Naive thymus-derived CD4-positive, alpha-beta T cell (primary cell): ENCODE measurements at regions of chr10 and their contacts with region 1.

Region 1: DNA sequence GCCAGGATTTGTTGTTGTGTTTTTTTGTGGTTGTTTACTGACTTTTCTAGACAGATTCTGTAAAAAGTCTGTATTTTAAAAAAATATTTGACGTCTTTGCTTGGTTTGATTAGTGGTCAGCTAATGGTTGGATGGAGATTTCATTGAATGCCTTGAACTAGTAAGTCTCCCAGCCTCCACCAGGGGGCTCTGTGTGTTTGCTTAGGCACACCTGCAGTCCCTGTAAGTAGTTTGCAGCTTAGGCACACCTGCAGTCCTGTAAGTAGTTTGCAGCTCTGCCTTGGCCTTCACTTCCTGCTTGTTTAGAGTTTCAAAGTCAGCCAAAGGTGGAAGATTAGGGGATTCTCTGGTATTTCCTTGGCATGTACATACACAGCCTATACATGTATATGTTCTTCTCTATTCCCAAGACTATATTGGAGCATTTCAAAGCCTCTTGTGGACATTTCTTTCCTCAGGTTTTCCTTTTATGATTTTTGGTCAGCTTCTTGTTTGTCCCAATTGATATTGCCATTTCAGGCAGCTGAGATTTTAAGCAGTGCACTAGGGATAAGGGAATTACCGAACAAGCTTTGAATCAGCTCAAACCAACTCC is 101.6 kb downstream of the CCSER2 start:
- DNase-seq: peak; percentile 23 to 55 (median 45)
- ATAC-seq: peak; percentile 84
- H3K4me3 ChIP-seq: no peak overlapping the region
- H3K4me3 Mint-ChIP-seq: peak overlapping the region in 3 of 10 donors; percentile 10 to 18 (median 14)
- H3K27ac ChIP-seq: no peak overlapping the region
- H3K27ac Mint-ChIP-seq: peak overlapping the region in 1 of 9 donors; percentile 24
- H3K4me1 ChIP-seq: peaks cover 1 to 9% of the 10 kb centered on the region in 2 donors
- H3K4me1 Mint-ChIP-seq: peaks cover 25 to 70% (median 59%) of the 10 kb centered on the region in 7 donors
- H3K27me3 ChIP-seq: no peaks in the 10 kb centered on the region
- H3K27me3 Mint-ChIP-seq: no peaks in the 10 kb centered on the region

Region 2: DNA sequence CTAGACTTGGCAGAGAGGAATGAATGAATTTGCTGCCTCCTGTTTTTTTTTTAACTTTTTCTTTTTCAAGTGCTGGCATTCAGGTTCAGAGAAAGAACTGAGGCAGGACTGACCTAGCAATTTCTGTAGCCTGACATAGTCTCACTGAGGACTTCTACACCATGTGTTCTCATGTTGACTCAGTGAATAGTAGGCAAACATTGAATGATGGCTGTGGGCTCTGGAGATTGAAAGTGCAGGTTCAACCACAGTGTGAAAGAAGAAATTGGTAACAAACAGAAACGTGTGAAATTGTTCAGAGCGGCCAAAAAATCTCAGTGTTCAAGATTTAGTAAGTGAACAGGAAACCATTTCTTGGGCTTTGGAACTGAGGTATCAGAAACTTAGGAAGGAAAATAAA is 613.1 kb before region 1 on chr10:
- CTCF ChIA-PET with region 1: no interaction called
- POLR2A ChIA-PET with region 1: no interaction called
- intact Hi-C with region 1: no loop called
- DNase-seq: no peak
- ATAC-seq: no peak
- H3K4me3 ChIP-seq: no peak overlapping the region
- H3K4me3 Mint-ChIP-seq: no peak overlapping the region
- H3K27ac ChIP-seq: no peak overlapping the region
- H3K27ac Mint-ChIP-seq: no peak overlapping the region
- H3K4me1 ChIP-seq: no peaks in the 10 kb centered on the region
- H3K4me1 Mint-ChIP-seq: no peaks in the 10 kb centered on the region
- H3K27me3 ChIP-seq: no peaks in the 10 kb centered on the region
- H3K27me3 Mint-ChIP-seq: no peaks in the 10 kb centered on the region

Region 3: DNA sequence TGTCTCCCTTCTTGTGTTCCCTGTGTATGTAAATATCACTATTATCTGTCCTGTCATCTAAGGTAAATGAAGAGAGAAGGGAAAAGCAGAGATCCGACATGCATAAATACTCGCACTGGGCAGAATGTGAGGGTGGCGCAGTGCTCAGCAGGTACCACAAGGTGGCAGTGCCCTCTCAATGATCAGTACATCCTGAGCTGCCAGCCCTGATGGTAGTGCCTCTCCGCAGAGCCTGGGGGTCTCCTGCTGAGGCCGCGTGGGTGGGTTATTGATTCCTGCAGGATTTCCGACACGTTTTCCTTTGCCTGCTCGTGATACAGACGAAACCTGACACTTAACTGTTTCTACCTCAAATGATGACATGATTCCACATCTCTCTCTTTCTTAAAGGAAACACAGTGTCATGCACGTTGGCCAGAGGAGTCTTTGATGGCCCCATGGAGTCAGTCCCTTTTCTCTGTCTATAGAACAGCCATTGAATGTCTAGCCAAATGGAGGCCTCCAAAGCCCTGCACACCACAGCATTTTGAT is 165.3 kb before region 1 on chr10:
- CTCF ChIA-PET with region 1: no interaction called
- POLR2A ChIA-PET with region 1: no interaction called
- intact Hi-C with region 1: loop called (anchors 1 to 5 kb)
- DNase-seq: peak; percentile 37 to 74 (median 61)
- ATAC-seq: peak; percentile 94
- H3K4me3 ChIP-seq: no peak overlapping the region
- H3K4me3 Mint-ChIP-seq: no peak overlapping the region
- H3K27ac ChIP-seq: no peak overlapping the region
- H3K27ac Mint-ChIP-seq: no peak overlapping the region
- H3K4me1 ChIP-seq: peaks cover 0 to 3% of the 10 kb centered on the region in 2 donors
- H3K4me1 Mint-ChIP-seq: peaks cover 0 to 16% (median 7%) of the 10 kb centered on the region in 7 donors
- H3K27me3 ChIP-seq: no peaks in the 10 kb centered on the region
- H3K27me3 Mint-ChIP-seq: peaks cover 12 to 36% (median 25%) of the 10 kb centered on the region in 5 donors

Region 4: DNA sequence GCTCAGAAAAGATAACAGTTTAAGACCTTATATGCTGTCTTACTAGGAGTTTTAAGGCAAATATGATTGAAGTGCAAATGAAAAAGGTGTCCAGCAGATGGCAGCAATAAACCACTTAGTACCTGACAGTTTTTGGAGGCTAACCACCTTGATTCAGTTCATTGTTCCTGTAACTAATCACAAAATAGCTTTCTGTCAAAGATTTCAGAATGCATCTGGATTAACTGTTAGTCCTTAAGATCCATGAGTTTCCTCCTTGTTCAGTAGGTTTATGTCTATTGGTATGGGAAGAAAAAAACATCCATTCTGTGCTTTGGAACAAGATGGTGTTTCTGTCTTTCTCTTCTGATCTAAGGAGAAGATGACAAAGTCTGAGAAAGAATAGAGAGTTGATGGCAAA is 55.0 kb before region 1 on chr10:
- CTCF ChIA-PET with region 1: no interaction called
- POLR2A ChIA-PET with region 1: no interaction called
- intact Hi-C with region 1: loop called in 1 of 2 experiments (anchors 5 kb)
- DNase-seq: peak in 7 of 9 donors; percentile 34 to 68 (median 57)
- ATAC-seq: peak; percentile 70
- H3K4me3 ChIP-seq: no peak overlapping the region
- H3K4me3 Mint-ChIP-seq: peak overlapping the region in 1 of 10 donors; percentile 4
- H3K27ac ChIP-seq: no peak overlapping the region
- H3K27ac Mint-ChIP-seq: peak overlapping the region in 5 of 9 donors; percentile 18 to 79 (median 41)
- H3K4me1 ChIP-seq: peaks cover 0 to 5% of the 10 kb centered on the region in 2 donors
- H3K4me1 Mint-ChIP-seq: peaks cover 19 to 55% (median 37%) of the 10 kb centered on the region in 7 donors
- H3K27me3 ChIP-seq: no peaks in the 10 kb centered on the region
- H3K27me3 Mint-ChIP-seq: no peaks in the 10 kb centered on the region

Region 5: GRCh38 chr10:84440781-84441180 is 10.8 kb after region 1 on chr10:
- CTCF ChIA-PET with region 1: interaction called, 10 read pairs
- POLR2A ChIA-PET with region 1: no interaction called
- intact Hi-C with region 1: no loop called
- DNase-seq: no peak
- ATAC-seq: no peak
- H3K4me3 ChIP-seq: no peak overlapping the region
- H3K4me3 Mint-ChIP-seq: no peak overlapping the region
- H3K27ac ChIP-seq: no peak overlapping the region
- H3K27ac Mint-ChIP-seq: no peak overlapping the region
- H3K4me1 ChIP-seq: no peaks in the 10 kb centered on the region
- H3K4me1 Mint-ChIP-seq: peaks cover 1 to 10% (median 4%) of the 10 kb centered on the region in 7 donors
- H3K27me3 ChIP-seq: no peaks in the 10 kb centered on the region
- H3K27me3 Mint-ChIP-seq: no peaks in the 10 kb centered on the region

Region 6: DNA sequence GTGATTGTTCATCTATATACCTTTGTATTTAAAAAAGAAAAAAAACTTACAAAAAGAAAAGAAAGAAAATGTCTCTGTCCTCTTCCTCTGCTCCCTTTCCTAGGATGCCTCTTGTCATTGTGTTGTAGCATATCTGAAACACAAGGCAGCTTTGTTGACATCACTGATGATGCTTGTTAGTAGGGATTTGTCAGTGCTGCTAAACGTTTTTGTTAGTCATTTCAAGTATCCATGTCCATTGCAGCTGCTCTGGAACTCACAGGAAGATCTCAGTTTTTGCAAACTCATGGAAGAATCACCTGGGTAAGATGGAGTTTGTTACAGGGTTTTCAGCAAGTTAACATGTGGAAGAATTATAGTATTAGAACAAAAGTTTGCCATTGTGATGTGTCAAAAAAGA is 22.0 kb after region 1 on chr10:
- CTCF ChIA-PET with region 1: interaction called, 3 read pairs
- POLR2A ChIA-PET with region 1: no interaction called
- intact Hi-C with region 1: loop called in 1 of 2 experiments (anchors 2 kb)
- DNase-seq: no peak
- ATAC-seq: no peak
- H3K4me3 ChIP-seq: no peak overlapping the region
- H3K4me3 Mint-ChIP-seq: no peak overlapping the region
- H3K27ac ChIP-seq: no peak overlapping the region
- H3K27ac Mint-ChIP-seq: peak overlapping the region in 1 of 9 donors; percentile 12
- H3K4me1 ChIP-seq: no peaks in the 10 kb centered on the region
- H3K4me1 Mint-ChIP-seq: peaks cover 2 to 26% (median 8%) of the 10 kb centered on the region in 7 donors
- H3K27me3 ChIP-seq: no peaks in the 10 kb centered on the region
- H3K27me3 Mint-ChIP-seq: no peaks in the 10 kb centered on the region

Region 7: DNA sequence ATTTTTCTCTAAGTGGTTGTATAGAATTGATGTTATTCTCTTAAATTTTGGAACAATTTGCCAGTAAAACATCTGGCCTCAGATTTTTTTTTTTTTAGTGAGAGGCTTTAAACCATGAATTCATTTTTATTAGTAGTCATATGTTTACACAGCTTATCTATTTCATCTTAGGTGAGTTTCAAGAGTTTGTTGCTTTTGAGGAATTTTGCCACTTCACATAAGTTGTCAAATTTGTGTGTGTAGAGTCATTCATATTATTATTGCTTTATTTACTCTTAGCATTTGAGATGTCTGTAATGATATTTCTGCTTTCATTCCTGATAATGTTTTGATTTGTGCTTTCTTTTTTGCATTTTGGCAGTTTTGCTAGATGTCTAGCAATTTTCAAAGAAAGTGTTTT is 30.5 kb after region 1 on chr10:
- CTCF ChIA-PET with region 1: interaction called, 3 read pairs
- POLR2A ChIA-PET with region 1: no interaction called
- intact Hi-C with region 1: loop called in 1 of 2 experiments (anchors 5 kb)
- DNase-seq: no peak
- ATAC-seq: no peak
- H3K4me3 ChIP-seq: no peak overlapping the region
- H3K4me3 Mint-ChIP-seq: no peak overlapping the region
- H3K27ac ChIP-seq: no peak overlapping the region
- H3K27ac Mint-ChIP-seq: no peak overlapping the region
- H3K4me1 ChIP-seq: peaks cover 0 to 5% of the 10 kb centered on the region in 2 donors
- H3K4me1 Mint-ChIP-seq: peaks cover 6 to 32% (median 22%) of the 10 kb centered on the region in 7 donors
- H3K27me3 ChIP-seq: no peaks in the 10 kb centered on the region
- H3K27me3 Mint-ChIP-seq: no peaks in the 10 kb centered on the region